Spleen (tissue), 13 donors: ENCODE measurements at regions of chrX and their contacts with region 1.

Region 1: GRCh38 chrX:87664381-87664780 is 146.8 kb downstream of the KLHL4 start:
- DNase-seq: no peak
- H3K4me3 ChIP-seq: no peak overlapping the region
- H3K27ac ChIP-seq: no peak overlapping the region
- H3K4me1 ChIP-seq: no peaks in the 10 kb centered on the region
- H3K27me3 ChIP-seq: no peaks in the 10 kb centered on the region
- CTCF ChIP-seq: peak in 3 of 11 experiments; percentile 18 to 28 (median 24)
- POLR2A ChIP-seq: no peak

Region 2: DNA sequence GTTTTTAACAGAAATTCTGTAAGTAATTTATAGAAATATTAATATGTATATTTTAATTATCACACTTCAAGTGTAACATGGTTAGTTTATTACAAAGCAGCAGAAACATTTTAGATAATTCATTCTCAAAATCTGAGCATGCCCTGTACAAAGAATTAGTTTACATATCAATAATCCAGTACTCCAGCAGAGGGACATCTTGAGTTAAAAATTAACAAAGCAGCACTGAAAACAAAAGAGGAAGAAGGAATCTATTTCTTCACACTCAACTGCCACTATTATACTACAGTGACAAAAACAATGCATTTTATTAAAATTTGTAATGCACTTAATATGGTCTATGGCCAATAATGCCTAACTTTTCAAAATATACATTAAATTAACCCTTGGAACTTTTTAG is 325.9 kb before region 1 on chrX:
- intact Hi-C with region 1: loop called (anchors 10 kb)
- DNase-seq: no peak
- H3K4me3 ChIP-seq: no peak overlapping the region
- H3K27ac ChIP-seq: no peak overlapping the region
- H3K4me1 ChIP-seq: no peaks in the 10 kb centered on the region
- H3K27me3 ChIP-seq: no peaks in the 10 kb centered on the region
- CTCF ChIP-seq: peak in 2 of 11 experiments; percentile 13 to 14
- POLR2A ChIP-seq: no peak